Activated CD8-positive, alpha-beta memory T cell treated with anti-CD3 and anti-CD28 coated beads, Interleukin-2, amount 10 ng/mL, durations not matched to agents 7 days and 5 days (primary cell): ENCODE measurements at regions of chr4 and their contacts with region 1.

Region 1: DNA sequence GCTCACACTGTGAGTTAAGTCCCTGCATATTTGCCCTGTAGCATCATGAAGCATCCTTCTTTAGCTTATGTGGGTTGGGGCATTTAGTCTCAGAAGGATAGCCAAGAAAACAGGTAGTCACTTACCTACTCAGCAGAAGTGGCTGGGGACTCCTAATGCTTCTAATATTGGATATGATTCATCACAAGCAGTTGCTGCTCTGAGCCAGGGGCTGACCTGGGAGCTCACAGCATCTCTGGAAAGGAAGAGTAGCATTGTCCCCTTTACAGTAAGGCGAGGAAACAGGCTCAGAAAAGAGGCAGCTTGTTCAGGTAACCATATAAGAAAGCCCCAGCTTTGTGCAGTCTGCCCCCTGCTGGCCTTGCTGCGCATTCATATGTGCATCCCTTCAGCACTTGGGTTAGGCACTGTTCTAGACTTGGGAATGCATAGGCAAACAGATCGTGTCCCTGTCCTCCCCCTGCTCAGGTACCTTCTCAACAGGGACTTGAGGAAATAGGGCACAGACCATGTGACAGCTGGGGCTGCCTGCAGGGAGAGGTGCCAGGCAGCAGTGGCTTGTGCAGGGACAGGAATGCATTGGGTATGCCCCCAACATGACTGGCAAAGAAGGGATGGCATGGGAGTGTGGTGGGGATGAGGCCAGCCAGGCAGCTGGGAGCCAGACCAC is 35.7 kb upstream of the TBC1D14 start:
- DNase-seq: peak; percentile 88
- ATAC-seq: peak; percentile 97
- H3K4me3 Mint-ChIP-seq: no peak overlapping the region
- H3K27ac Mint-ChIP-seq: no peak overlapping the region
- H3K4me1 Mint-ChIP-seq: peaks cover 9% of the 10 kb centered on the region
- H3K27me3 Mint-ChIP-seq: no peaks in the 10 kb centered on the region

Region 2: GRCh38 chr4:6673660-6674499 is 200.0 kb before region 1 on chr4:
- CTCF ChIA-PET with region 1: interaction called, 28 read pairs
- DNase-seq: peak; percentile 96
- ATAC-seq: peak; percentile 79
- H3K4me3 Mint-ChIP-seq: peak overlapping the region; percentile 91
- H3K27ac Mint-ChIP-seq: peak overlapping the region; percentile 98
- H3K4me1 Mint-ChIP-seq: peaks cover 47% of the 10 kb centered on the region
- H3K27me3 Mint-ChIP-seq: no peaks in the 10 kb centered on the region

Region 3: DNA sequence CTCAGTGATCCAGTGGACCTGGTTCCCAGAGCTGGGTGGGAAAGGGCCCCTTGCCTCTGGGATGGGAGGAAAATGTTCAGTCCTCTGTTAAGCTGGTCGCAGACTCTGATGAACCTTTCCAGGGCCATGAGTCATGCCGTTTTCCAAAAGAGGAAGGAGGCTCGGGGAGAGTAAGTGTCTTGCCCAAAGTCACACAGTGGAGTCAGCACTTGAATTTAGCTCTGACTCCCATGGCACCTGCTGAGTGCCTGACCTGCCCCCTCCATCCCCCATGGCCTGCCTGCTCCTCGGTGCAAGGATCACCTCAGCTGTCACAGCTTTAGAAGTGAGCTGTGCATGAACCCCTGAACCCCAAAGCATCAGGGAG is 105.4 kb before region 1 on chr4:
- CTCF ChIA-PET with region 1: interaction called, 22 read pairs
- DNase-seq: no peak
- ATAC-seq: no peak
- H3K4me3 Mint-ChIP-seq: no peak overlapping the region
- H3K27ac Mint-ChIP-seq: no peak overlapping the region
- H3K4me1 Mint-ChIP-seq: peaks cover 12% of the 10 kb centered on the region
- H3K27me3 Mint-ChIP-seq: no peaks in the 10 kb centered on the region

Region 4: GRCh38 chr4:6783053-6783981 is 90.6 kb before region 1 on chr4:
- CTCF ChIA-PET with region 1: interaction called, 31 read pairs
- DNase-seq: peak; percentile 93
- ATAC-seq: peak; percentile 80
- H3K4me3 Mint-ChIP-seq: peak overlapping the region; percentile 80
- H3K27ac Mint-ChIP-seq: peak overlapping the region; percentile 83
- H3K4me1 Mint-ChIP-seq: peaks cover 52% of the 10 kb centered on the region
- H3K27me3 Mint-ChIP-seq: no peaks in the 10 kb centered on the region

Region 5: GRCh38 chr4:6859543-6859942 is 14.4 kb before region 1 on chr4:
- CTCF ChIA-PET with region 1: interaction called, 18 read pairs
- DNase-seq: no peak
- ATAC-seq: no peak
- H3K4me3 Mint-ChIP-seq: no peak overlapping the region
- H3K27ac Mint-ChIP-seq: no peak overlapping the region
- H3K4me1 Mint-ChIP-seq: peaks cover 20% of the 10 kb centered on the region
- H3K27me3 Mint-ChIP-seq: no peaks in the 10 kb centered on the region

Region 6: DNA sequence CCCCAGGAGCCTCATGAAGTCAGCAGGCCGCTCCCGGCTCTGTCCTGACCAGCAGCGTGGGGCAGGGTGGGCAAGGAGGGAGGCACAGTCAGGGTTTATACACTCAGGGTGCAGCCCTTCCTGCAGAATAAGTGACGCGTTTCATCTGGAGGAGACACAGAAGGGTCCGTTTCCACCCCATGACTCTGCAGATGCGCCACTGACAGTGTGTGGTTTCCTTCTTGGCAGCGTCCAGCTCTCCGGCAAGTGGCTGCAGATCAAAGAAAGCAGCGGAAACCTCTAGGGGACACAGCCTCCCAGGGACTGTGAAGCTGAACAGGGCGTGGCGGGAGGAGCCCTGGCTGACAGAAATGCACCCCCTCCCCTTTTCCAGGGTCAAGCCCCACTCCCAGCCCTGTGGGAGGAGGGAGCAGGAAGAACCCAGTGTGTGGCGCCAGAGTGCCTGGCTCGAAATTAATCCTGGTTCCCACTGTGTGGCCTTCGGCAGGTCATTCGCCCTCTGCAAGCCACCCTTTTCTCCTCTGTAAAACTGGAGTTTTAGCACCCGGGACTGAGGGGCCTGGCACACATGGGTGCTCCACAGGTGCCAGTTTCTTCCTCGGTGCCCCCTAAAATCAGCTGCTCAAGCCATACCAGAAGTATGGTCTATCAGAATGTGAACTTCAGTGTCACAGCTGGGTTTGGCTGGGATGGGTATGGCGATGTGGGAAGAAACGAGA is 18.4 kb after region 1 on chr4:
- CTCF ChIA-PET with region 1: interaction called, 47 read pairs
- DNase-seq: peak; percentile 79
- ATAC-seq: peak; percentile 82
- H3K4me3 Mint-ChIP-seq: peak overlapping the region; percentile 53
- H3K27ac Mint-ChIP-seq: peak overlapping the region; percentile 96
- H3K4me1 Mint-ChIP-seq: peaks cover 52% of the 10 kb centered on the region
- H3K27me3 Mint-ChIP-seq: no peaks in the 10 kb centered on the region

Region 7: DNA sequence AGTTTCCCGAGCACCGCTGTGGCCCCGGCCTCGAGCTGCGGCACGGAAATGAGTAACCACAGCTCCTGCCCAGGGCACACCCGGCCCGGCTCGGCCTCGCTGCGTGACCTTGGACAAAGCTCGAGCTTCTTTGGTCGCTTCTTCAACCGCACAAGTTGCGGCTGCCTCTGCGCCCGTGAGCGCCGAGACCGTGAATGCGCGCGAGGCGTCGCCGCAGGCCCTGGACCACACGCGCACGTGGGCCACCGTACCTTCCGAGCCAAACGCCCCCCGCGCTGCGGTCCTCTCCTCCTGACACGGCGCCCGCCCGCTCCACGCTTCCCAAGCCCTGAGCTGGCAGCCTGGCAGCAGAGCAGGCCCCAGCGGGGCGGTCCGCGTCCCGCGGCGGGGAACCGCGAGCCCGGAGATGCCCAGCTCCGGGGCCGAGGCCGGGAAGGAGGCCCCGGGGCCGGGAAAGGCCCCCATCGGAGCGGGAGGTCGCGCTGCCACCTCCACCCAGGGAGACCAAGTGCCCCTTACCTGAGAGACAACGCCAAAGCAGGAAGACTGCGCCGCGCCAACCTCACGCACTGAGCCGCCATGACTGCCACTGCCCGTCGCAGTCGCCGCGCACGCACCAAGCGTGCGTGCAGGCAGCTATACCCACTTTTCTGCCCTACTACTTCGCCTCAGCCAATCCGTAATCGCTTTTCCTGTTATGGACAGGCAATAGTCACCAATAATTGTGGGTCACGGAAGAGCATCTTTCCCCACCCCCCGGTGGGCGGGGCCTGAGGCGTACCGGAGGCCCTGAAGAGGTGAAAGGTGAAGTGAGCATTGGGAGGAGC is 193.7 kb after region 1 on chr4 and contains the start of gene GRPEL1:
- CTCF ChIA-PET with region 1: interaction called, 11 read pairs
- DNase-seq: peak; percentile 100
- ATAC-seq: peak; percentile 93
- H3K4me3 Mint-ChIP-seq: peak within 1 kb of the TSS; percentile 87
- H3K27ac Mint-ChIP-seq: peak within 1 kb of the TSS; percentile 93
- H3K4me1 Mint-ChIP-seq: peaks cover 42% of the 10 kb centered on the region
- H3K27me3 Mint-ChIP-seq: peaks cover 14% of the 10 kb centered on the region
- total RNA-seq, gene GRPEL1: 40.0 to 59.9 TPM